Activated naive CD4-positive, alpha-beta T cell treated with anti-CD3 and anti-CD28 coated beads for 36 hours (primary cell): ENCODE measurements at regions of chr17 and their contacts with region 1.

Region 1: DNA sequence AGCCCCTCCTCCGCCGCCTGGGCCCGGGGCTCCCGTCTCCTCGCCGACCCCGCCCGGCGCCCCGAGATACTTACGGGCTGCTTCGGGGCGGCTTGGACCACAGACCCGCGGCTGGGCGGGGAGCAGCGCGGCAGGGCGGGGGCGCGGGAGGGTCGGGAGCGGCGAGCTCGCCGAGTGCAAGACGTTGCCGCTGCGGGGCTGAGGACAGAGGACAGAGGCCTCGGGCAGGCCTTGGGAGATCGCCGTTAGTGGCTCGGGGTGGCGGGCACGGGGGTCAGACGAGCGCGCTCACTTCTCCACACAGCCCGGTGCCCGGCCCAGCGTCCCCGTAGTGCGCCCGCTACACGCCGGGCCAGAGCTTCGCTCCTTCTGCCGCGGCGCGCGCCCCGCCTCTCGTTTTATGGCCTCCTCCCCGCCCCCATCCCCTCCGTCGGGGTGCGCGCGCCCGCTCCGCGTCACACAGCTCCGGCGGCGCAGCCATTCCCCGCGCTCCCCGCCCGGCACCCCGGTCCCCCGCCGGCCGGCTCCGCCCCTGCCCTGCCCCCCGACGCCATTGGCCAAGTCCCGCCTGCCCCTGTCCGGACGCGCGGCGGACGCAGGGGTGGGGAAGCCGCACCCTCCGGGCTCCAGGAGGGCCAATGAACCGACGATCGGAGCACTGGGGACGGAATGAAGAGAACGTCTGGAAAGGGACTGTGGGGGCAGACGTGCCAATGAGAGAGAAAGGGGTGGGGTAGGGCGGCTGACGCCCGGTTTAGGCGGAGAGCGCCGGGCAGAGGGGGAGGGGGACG is at the start of gene TOB1:
- DNase-seq: peak; percentile 97
- H3K4me3 Mint-ChIP-seq: peak within 1 kb of the TSS; percentile 97
- H3K27ac Mint-ChIP-seq: peak within 1 kb of the TSS; percentile 96
- H3K4me1 Mint-ChIP-seq: peaks cover 45% of the 10 kb centered on the region
- H3K27me3 Mint-ChIP-seq: no peaks in the 10 kb centered on the region
- total RNA-seq, gene TOB1: 40.7 to 44.7 TPM

Region 2: GRCh38 chr17:50151041-50151936 is 714.9 kb before region 1 on chr17:
- CTCF ChIA-PET with region 1: no interaction called
- intact Hi-C with region 1: loop called (anchors 2 kb)
- DNase-seq: peak; percentile 94
- H3K4me3 Mint-ChIP-seq: peak overlapping the region; percentile 88
- H3K27ac Mint-ChIP-seq: peak overlapping the region; percentile 96
- H3K4me1 Mint-ChIP-seq: peaks cover 44% of the 10 kb centered on the region
- H3K27me3 Mint-ChIP-seq: no peaks in the 10 kb centered on the region

Region 3: DNA sequence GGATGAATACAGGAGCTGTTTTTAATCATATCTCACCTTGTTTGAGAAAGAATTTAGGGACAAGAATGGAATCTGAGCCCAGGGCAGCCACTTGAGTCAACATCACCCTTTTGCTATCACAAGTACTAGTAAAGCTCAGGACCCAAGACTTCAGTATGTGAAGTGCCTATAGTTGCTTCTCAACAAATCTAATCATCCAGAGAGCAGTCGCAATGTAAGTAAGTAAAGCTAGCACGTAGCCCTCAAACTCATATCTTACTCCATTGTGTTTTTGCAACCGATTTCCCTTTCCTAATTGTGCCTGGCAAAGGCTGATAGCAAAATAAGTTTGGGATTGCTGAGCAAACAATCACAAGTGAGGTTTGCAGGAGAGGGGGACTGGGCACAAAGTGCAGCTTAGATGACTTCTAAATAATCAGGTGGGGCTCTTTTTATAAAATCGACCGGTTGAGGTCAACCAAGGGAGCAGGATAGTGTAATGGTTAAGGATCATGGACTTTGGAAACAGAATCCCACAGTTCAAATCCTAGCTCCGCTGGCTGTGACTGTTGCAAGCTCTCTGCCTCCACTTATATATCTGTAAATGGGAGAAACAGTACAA is 13.1 kb before region 1 on chr17:
- CTCF ChIA-PET with region 1: interaction called, 43 read pairs
- intact Hi-C with region 1: loop called (anchors 1 kb)
- DNase-seq: no peak
- H3K4me3 Mint-ChIP-seq: no peak overlapping the region
- H3K27ac Mint-ChIP-seq: no peak overlapping the region
- H3K4me1 Mint-ChIP-seq: peaks cover 14% of the 10 kb centered on the region
- H3K27me3 Mint-ChIP-seq: no peaks in the 10 kb centered on the region

Region 4: DNA sequence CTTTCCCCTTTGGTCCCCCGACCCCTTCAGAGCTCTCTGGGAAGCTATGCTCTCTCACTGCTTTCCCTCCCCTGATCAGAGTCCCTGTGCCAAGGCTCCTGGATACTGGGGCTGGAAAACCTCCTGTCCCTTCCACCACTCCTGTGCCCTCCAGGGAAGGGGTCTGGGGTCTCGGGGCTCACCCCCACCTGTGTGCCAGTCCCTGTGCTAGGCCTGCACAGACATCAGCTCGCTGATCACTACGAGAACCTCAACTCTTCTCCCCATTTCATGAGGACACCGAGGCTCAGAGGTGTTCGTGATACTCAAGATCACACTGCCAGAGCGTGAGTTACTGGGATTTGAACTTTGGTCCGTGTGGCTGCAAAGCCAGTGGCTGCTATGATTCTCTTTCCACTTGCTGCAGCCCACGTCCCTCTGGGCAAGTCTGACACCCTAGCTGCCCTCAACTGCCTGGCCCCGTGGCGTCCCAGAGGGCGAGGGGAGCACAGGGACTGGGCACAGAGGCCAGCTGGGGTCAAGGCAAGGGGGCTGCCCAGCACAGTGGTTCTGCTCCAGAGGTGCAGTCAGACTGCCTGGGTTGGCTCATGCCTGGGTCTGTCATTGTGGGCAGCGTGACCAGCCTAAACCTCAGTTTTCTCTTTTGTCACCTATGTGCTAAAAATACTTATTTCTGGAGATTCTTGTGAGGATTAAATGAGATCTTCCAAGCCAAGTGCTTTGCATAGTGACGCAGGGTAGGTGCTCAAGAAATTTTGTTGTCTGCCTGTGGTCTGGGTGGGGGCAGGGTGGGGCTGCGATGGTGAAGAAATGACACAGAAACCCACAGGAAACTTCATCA is 43.8 kb after region 1 on chr17:
- CTCF ChIA-PET with region 1: interaction called, 5 read pairs
- intact Hi-C with region 1: loop called (anchors 1 kb)
- DNase-seq: peak; percentile 91
- H3K4me3 Mint-ChIP-seq: no peak overlapping the region
- H3K27ac Mint-ChIP-seq: peak overlapping the region; percentile 60
- H3K4me1 Mint-ChIP-seq: peaks cover 67% of the 10 kb centered on the region
- H3K27me3 Mint-ChIP-seq: no peaks in the 10 kb centered on the region

Region 5: GRCh38 chr17:50944054-50944901 is 78.1 kb after region 1 on chr17:
- CTCF ChIA-PET with region 1: interaction called, 10 read pairs
- intact Hi-C with region 1: loop called (anchors 1 kb)
- DNase-seq: peak; percentile 91
- H3K4me3 Mint-ChIP-seq: peak overlapping the region; percentile 81
- H3K27ac Mint-ChIP-seq: peak overlapping the region; percentile 91
- H3K4me1 Mint-ChIP-seq: peaks cover 28% of the 10 kb centered on the region
- H3K27me3 Mint-ChIP-seq: no peaks in the 10 kb centered on the region

Region 6: DNA sequence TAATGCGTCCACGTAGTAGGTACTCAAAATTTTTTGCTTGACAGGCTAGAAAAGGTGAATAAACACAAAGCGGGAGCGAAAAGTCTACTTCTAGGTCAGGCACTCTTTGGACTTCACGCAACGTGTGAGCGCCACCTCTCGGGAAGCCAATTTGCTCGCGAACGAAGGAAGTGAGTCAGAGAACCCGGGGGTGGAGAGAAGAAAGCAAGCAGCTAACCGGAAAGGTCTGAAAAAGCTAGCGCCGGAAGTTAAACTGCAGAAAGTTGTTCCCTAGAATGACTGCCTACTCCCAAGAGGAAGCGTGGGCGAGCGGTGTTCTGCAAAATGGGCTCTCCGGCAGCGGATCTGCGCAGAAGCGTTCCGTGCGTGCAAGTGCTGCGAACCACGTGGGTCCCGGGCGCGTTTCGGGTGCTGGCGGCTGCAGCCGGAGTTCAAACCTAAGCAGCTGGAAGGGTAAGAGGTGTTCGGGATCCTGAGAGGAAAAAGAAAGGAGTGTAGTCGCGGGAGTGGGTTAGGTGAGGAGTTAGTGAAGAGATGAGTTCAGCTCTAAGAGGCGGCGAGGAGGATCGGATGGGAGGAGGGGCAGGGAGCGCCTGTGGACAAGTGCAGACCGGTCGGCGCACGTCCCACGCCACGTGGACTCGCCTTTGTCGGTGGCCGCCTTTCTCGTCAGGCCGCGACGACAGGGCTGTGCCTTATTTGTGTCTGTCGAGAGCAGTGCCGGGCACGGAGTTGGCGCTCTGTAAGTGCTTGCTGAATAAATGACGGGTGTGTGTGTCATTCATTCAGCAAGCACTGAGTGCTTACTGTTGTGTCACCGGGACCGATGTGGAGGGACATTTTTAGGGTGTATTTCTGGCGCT is 287.3 kb after region 1 on chr17 and contains the start of gene NME1:
- CTCF ChIA-PET with region 1: no interaction called
- intact Hi-C with region 1: loop called (anchors 1 kb)
- DNase-seq: peak; percentile 99
- H3K4me3 Mint-ChIP-seq: no peak within 1 kb of the TSS
- H3K27ac Mint-ChIP-seq: no peak within 1 kb of the TSS
- H3K4me1 Mint-ChIP-seq: peaks cover 27% of the 10 kb centered on the region
- H3K27me3 Mint-ChIP-seq: no peaks in the 10 kb centered on the region
- total RNA-seq, gene NME1: 259 to 263 TPM

Region 7: DNA sequence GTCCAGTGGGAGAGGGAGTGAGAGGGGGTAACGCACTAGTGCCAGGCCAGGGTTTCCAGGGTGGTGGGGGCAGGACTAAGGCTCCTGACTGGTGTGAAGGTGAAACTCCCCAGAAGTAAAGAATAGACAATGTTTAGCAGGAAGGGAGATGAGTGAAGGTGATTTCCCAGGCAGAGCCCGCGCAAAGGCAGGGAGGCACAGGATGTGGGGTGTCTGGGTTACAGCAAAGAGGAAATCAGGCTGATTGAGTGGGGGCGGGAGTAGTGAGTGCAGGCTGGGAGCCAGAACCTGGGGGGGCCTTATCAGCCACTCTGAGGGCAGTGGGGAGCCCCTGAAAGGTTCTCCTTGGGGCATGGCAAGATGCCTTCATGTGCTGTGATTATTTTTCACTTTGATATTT is 561.7 kb after region 1 on chr17:
- CTCF ChIA-PET with region 1: no interaction called
- intact Hi-C with region 1: loop called (anchors 2 kb)
- DNase-seq: peak; percentile 92
- H3K4me3 Mint-ChIP-seq: peak overlapping the region; percentile 48
- H3K27ac Mint-ChIP-seq: peak overlapping the region; percentile 93
- H3K4me1 Mint-ChIP-seq: peaks cover 65% of the 10 kb centered on the region
- H3K27me3 Mint-ChIP-seq: no peaks in the 10 kb centered on the region